ENCODE measurements at regions of chr13 and their contacts with region 1.

Region 1: GRCh38 chr13:99436686-99437416 is 64.4 kb upstream of the TM9SF2 start:
- DNase-seq: peak; percentile 98
- ATAC-seq: peak; percentile 30
- H3K4me3 Mint-ChIP-seq: peak overlapping the region; percentile 0
- H3K27ac Mint-ChIP-seq: peak overlapping the region; percentile 45
- H3K4me1 Mint-ChIP-seq: peaks cover 60% of the 10 kb centered on the region
- H3K27me3 Mint-ChIP-seq: peaks cover 2% of the 10 kb centered on the region

Region 2: DNA sequence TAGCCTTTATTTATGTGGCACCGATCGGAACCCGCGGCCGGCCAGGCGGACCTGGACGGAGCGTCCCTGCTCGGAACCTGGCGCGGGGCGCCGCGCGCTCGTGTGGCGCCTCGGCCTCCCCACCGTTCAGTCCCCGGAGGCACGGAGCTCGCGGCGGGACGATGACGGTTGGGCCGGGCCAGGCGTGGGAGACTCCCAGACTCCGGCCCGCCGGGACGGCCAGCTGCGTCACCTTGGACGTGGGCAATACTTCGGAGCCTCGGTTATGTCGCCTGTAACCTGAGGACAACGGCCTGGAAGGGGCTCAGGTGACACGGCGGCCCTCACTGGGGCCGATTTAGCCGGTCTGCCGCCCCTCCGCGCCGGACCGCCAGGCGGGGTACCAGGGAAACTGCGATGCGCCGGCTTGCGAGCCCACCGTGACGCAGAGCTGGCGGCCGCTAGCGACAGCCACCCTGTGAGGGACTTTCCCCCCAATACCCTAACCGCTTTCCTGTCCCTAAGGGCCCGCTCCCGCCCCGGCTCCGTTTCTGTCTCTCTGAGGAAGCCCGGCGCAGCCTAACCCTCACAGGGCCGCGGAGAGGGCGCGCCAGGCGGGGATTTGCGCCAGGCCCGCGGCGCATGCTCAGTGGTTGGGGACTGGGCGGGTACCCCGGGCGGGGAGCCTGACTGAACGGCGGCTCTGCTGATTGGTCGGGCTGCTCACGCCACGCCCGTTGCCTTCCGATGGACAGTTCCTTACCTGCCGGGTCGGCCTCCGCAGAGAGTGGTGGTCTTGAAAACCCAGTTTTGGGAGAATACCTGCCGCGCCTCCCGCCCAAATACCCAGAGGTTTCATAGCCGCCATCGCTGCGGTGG is 349.5 kb before region 1 on chr13:
- CTCF ChIA-PET with region 1: no interaction called
- POLR2A ChIA-PET with region 1: no interaction called
- intact Hi-C with region 1: loop called in 1 of 2 experiments (anchors 1 kb)
- DNase-seq: peak; percentile 96
- ATAC-seq: peak; percentile 89
- H3K4me3 Mint-ChIP-seq: peak overlapping the region; percentile 89
- H3K27ac Mint-ChIP-seq: peak overlapping the region; percentile 95
- H3K4me1 Mint-ChIP-seq: peaks cover 31% of the 10 kb centered on the region
- H3K27me3 Mint-ChIP-seq: no peaks in the 10 kb centered on the region

Region 3: DNA sequence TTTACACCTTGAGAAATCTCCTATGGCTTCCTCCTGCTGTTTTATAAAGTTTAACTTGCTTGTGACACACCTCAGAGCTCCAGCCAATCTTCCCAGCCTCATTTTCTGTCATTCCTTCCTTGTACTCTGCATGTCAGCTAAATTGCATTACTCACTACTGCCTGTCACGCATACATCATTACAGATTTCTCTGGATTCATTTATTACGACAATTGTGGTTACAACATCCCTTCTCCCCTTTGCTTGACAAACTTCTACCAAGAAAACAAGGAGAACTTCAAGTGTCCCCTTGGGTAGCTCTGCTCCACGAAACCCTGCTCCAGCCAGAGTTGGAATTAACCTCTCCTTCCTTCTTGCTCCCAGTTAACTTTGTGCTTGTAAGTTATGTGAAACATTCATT is 156.7 kb before region 1 on chr13:
- CTCF ChIA-PET with region 1: interaction called, 10 read pairs
- POLR2A ChIA-PET with region 1: no interaction called
- intact Hi-C with region 1: no loop called
- DNase-seq: no peak
- ATAC-seq: peak; percentile 23
- H3K4me3 Mint-ChIP-seq: no peak overlapping the region
- H3K27ac Mint-ChIP-seq: peak overlapping the region; percentile 49
- H3K4me1 Mint-ChIP-seq: peaks cover 91% of the 10 kb centered on the region
- H3K27me3 Mint-ChIP-seq: no peaks in the 10 kb centered on the region

Region 4: GRCh38 chr13:99314640-99315176 is 122.1 kb before region 1 on chr13:
- CTCF ChIA-PET with region 1: interaction called, 13 read pairs
- POLR2A ChIA-PET with region 1: interaction called, 21 read pairs
- intact Hi-C with region 1: loop called in 1 of 2 experiments (anchors 2 kb)
- DNase-seq: peak; percentile 85
- ATAC-seq: peak; percentile 76
- H3K4me3 Mint-ChIP-seq: peak overlapping the region; percentile 60
- H3K27ac Mint-ChIP-seq: peak overlapping the region; percentile 96
- H3K4me1 Mint-ChIP-seq: peaks cover 88% of the 10 kb centered on the region
- H3K27me3 Mint-ChIP-seq: no peaks in the 10 kb centered on the region

Region 5: GRCh38 chr13:99386911-99387788 is 49.7 kb before region 1 on chr13:
- CTCF ChIA-PET with region 1: interaction called, 131 read pairs
- POLR2A ChIA-PET with region 1: interaction called, 4 read pairs
- intact Hi-C with region 1: loop called (anchors 1 kb)
- DNase-seq: peak; percentile 94
- ATAC-seq: peak; percentile 62
- H3K4me3 Mint-ChIP-seq: no peak overlapping the region
- H3K27ac Mint-ChIP-seq: peak overlapping the region; percentile 76
- H3K4me1 Mint-ChIP-seq: peaks cover 63% of the 10 kb centered on the region
- H3K27me3 Mint-ChIP-seq: no peaks in the 10 kb centered on the region

Region 6: DNA sequence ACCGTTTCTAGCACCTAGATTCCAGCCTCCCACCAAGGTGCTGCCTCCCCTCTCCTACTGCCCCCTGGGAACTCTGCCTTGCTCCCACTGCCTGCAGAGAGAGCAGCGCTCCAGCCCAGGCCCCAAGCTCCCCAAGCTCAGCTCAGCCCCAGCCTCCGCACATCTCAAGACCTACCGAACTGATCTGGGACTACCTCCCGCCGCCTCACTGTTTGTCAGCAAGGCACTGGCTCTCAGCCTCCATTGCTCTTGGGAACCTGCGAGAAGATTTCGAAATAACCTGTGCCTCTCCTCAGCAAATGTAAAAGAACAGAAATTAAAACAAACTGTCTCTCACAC is 37.2 kb before region 1 on chr13:
- CTCF ChIA-PET with region 1: no interaction called
- POLR2A ChIA-PET with region 1: no interaction called
- intact Hi-C with region 1: no loop called
- DNase-seq: peak; percentile 6
- ATAC-seq: no peak
- H3K4me3 Mint-ChIP-seq: peak overlapping the region; percentile 50
- H3K27ac Mint-ChIP-seq: peak overlapping the region; percentile 90
- H3K4me1 Mint-ChIP-seq: peaks cover 51% of the 10 kb centered on the region
- H3K27me3 Mint-ChIP-seq: no peaks in the 10 kb centered on the region

Region 7: GRCh38 chr13:99548448-99548847 is 111.6 kb after region 1 on chr13:
- CTCF ChIA-PET with region 1: no interaction called
- POLR2A ChIA-PET with region 1: interaction called, 3 read pairs
- intact Hi-C with region 1: loop called in 1 of 2 experiments (anchors 5 kb)
- DNase-seq: no peak
- ATAC-seq: peak; percentile 82
- H3K4me3 Mint-ChIP-seq: no peak overlapping the region
- H3K27ac Mint-ChIP-seq: no peak overlapping the region
- H3K4me1 Mint-ChIP-seq: peaks cover 34% of the 10 kb centered on the region
- H3K27me3 Mint-ChIP-seq: no peaks in the 10 kb centered on the region

Measured in activated CD4-positive, alpha-beta T cell treated with anti-CD3 and anti-CD28 coated beads for 36 hours (primary cell).